ENCODE measurements at regions of chr1 and their contacts with region 1.

Region 1: DNA sequence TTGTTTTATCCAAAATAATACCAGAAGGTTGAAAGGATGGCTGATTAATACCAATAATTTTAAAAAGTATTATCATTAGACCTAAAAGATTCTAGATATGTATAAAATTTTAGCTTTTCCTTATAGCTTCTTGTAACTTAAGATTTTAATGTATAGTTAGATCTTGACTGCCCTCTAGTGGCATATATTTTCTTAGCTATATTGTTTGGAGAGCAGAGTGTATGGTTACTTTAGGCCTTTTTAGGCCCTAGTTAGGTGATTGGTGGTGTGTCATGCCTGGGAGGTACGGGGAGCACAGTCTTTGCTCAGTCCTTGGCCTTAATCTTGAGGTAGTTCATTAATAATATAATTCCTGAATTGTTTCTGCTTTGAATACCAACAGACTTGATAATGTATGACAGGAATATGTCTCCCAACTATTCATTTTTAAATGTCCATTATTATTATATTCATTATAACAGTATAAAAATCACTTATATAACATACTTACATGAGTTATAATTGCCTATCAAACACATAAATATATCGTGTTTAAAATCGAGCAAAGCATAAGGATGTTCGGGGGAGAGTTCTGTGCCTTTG is 328.4 kb downstream of the ZP4 start:
- DNase-seq: peak; percentile 35 to 75 (median 62)
- ATAC-seq: peak; percentile 93
- H3K4me3 ChIP-seq: no peak overlapping the region
- H3K27ac ChIP-seq: no peak overlapping the region
- H3K4me1 ChIP-seq: no peaks in the 10 kb centered on the region
- H3K27me3 ChIP-seq: no peaks in the 10 kb centered on the region
- CTCF ChIP-seq: peak; percentile 29 to 63 (median 58); a peak in 5 of 6 replicates
- EP300 ChIP-seq: no peak
- POLR2A ChIP-seq: no peak
- RAD21 ChIP-seq: peak; percentile 62 to 66

Region 2: DNA sequence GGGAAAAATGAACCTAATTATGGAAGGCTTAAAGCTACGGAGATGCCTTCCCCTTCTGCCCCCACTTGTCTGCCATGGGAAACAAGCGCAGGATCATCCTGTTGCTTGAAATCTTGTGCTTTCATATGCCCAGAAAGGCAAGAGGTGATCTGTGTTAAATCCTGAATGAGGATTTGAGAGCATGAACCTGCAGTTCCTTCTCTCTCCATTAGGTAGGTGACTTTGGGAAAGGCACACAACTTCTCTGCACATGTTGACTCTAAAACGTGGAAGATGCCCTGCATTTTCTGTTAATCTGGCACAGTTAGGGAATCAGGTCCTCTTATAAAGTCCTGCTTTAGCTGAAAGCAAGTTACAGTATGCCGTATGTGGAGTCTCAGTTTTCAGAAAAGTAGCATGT is 813.9 kb before region 1 on chr1:
- CTCF ChIA-PET with region 1: no interaction called
- POLR2A ChIA-PET with region 1: interaction called, 3 read pairs
- in situ Hi-C with region 1: loop called (anchors 25 kb)
- intact Hi-C with region 1: loop called (anchors 2 kb)
- DNase-seq: no peak
- ATAC-seq: peak; percentile 69
- H3K4me3 ChIP-seq: no peak overlapping the region
- H3K27ac ChIP-seq: no peak overlapping the region
- H3K4me1 ChIP-seq: peaks cover 4% of the 10 kb centered on the region in 2 experiments; a peak in 3 of 5 replicates
- H3K27me3 ChIP-seq: peaks cover 18 to 37% of the 10 kb centered on the region in 2 experiments
- CTCF ChIP-seq: peak; percentile 6 to 28 (median 22); a peak in 2 of 6 replicates
- EP300 ChIP-seq: no peak
- POLR2A ChIP-seq: no peak
- RAD21 ChIP-seq: no peak